ENCODE measurements at regions of chr2 and their contacts with region 1.

Region 1: GRCh38 chr2:203814661-203815540 is 52.7 kb upstream of the CTLA4 start:
- DNase-seq: peak; percentile 14 to 68 (median 57)
- H3K4me3 ChIP-seq: peak overlapping the region; percentile 31
- H3K4me3 Mint-ChIP-seq: peak overlapping the region in 5 of 7 donors; percentile 64 to 74 (median 72)
- H3K27ac ChIP-seq: no peak overlapping the region
- H3K27ac Mint-ChIP-seq: peak overlapping the region in 5 of 8 donors; percentile 24 to 89 (median 68)
- H3K4me1 ChIP-seq: peaks cover 30% of the 10 kb centered on the region
- H3K4me1 Mint-ChIP-seq: peaks cover 35 to 46% (median 45%) of the 10 kb centered on the region in 3 donors
- H3K27me3 ChIP-seq: no peaks in the 10 kb centered on the region
- H3K27me3 Mint-ChIP-seq: peaks cover 0 to 8% of the 10 kb centered on the region in 2 donors

Region 2: GRCh38 chr2:203225423-203226039 is 589.4 kb before region 1 on chr2:
- CTCF ChIA-PET with region 1: interaction called, 15 read pairs
- POLR2A ChIA-PET with region 1: interaction called, 3 read pairs
- DNase-seq: peak; percentile 5 to 52 (median 15)
- H3K4me3 ChIP-seq: no peak overlapping the region
- H3K4me3 Mint-ChIP-seq: no peak overlapping the region
- H3K27ac ChIP-seq: no peak overlapping the region
- H3K27ac Mint-ChIP-seq: no peak overlapping the region
- H3K4me1 ChIP-seq: no peaks in the 10 kb centered on the region
- H3K4me1 Mint-ChIP-seq: no peaks in the 10 kb centered on the region
- H3K27me3 ChIP-seq: no peaks in the 10 kb centered on the region
- H3K27me3 Mint-ChIP-seq: no peaks in the 10 kb centered on the region

Region 3: GRCh38 chr2:203484266-203485112 is 330.4 kb before region 1 on chr2:
- CTCF ChIA-PET with region 1: interaction called, 38 read pairs
- POLR2A ChIA-PET with region 1: interaction called, 3 read pairs
- DNase-seq: peak; percentile 4 to 66 (median 42)
- H3K4me3 ChIP-seq: no peak overlapping the region
- H3K4me3 Mint-ChIP-seq: no peak overlapping the region
- H3K27ac ChIP-seq: no peak overlapping the region
- H3K27ac Mint-ChIP-seq: peak overlapping the region in 1 of 8 donors; percentile 1
- H3K4me1 ChIP-seq: peaks cover 4% of the 10 kb centered on the region
- H3K4me1 Mint-ChIP-seq: peaks cover 0 to 6% (median 5%) of the 10 kb centered on the region in 3 donors
- H3K27me3 ChIP-seq: no peaks in the 10 kb centered on the region
- H3K27me3 Mint-ChIP-seq: no peaks in the 10 kb centered on the region

Region 4: GRCh38 chr2:203782262-203782976 is 32.5 kb before region 1 on chr2:
- CTCF ChIA-PET with region 1: interaction called, 28 read pairs
- POLR2A ChIA-PET with region 1: no interaction called
- DNase-seq: peak; percentile 19 to 82 (median 59)
- H3K4me3 ChIP-seq: no peak overlapping the region
- H3K4me3 Mint-ChIP-seq: peak overlapping the region in 4 of 7 donors; percentile 10 to 35 (median 30)
- H3K27ac ChIP-seq: no peak overlapping the region
- H3K27ac Mint-ChIP-seq: peak overlapping the region in 6 of 8 donors; percentile 54 to 94 (median 82)
- H3K4me1 ChIP-seq: peaks cover 26% of the 10 kb centered on the region
- H3K4me1 Mint-ChIP-seq: peaks cover 35 to 51% (median 47%) of the 10 kb centered on the region in 3 donors
- H3K27me3 ChIP-seq: no peaks in the 10 kb centered on the region
- H3K27me3 Mint-ChIP-seq: no peaks in the 10 kb centered on the region

Region 5: GRCh38 chr2:203909261-203909967 is 94.5 kb after region 1 on chr2:
- CTCF ChIA-PET with region 1: interaction called, 11 read pairs
- POLR2A ChIA-PET with region 1: no interaction called
- DNase-seq: peak in 2 of 5 donors; percentile 21 to 41
- H3K4me3 ChIP-seq: no peak overlapping the region
- H3K4me3 Mint-ChIP-seq: peak overlapping the region in 2 of 7 donors; percentile 10 to 17
- H3K27ac ChIP-seq: no peak overlapping the region
- H3K27ac Mint-ChIP-seq: peak overlapping the region in 2 of 8 donors; percentile 7 to 19
- H3K4me1 ChIP-seq: peaks cover 8% of the 10 kb centered on the region
- H3K4me1 Mint-ChIP-seq: peaks cover 14 to 15% (median 14%) of the 10 kb centered on the region in 3 donors
- H3K27me3 ChIP-seq: no peaks in the 10 kb centered on the region
- H3K27me3 Mint-ChIP-seq: peaks cover 6% of the 10 kb centered on the region in 2 donors